Activated T-helper 2 cell treated with anti-CD3 and anti-CD28 coated beads, Interferon-gamma antibody, Interleukin-2, Interleukin-4, amounts not matched to agents 10 μg/mL and 5 μg/mL and 100 μg/mL, durations not matched to agents 14 hours and 24 hours and 36 hours (primary cell): ENCODE measurements at regions of chr1 and their contacts with region 1.

Region 1: DNA sequence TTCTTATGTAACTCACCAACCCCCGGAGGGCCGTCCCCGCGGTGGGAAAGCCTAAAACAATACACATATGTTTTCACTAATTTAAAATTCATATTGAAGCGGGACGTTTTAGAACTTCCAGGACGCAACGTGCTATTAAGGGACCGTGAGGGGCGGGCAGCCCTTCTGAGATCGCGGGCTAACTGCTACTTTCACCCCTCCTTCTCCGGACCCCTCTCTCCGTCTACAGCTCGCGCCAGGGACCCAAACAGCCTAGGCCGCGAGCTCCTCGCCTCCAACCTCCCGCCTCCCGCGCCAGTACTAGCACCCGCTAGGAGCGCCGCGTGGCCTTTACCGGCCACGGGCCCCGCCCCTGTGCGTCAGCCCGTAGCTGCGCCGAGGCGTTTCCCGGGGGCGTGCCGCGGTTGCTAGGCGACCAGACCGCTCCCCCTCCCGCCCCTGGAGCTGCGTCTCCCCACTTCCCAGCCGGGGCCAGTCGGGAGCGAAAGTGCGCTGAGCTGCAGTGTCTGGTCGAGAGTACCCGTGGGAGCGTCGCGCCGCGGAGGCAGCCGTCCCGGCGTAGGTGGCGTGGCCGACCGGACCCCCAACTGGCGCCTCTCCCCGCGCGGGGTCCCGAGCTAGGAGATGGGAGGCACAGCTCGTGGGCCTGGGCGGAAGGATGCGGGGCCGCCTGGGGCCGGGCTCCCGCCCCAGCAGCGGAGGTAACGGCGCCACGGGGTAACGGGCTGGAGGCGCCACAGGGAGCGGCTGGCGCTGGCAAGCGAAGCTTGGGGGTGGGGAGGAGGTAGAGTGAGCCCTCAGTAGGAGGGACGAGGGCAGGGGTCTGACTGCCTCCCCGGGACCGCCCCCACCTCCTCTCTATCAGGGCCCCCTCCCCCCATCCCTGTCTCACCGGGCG is at the start of gene DYRK3:
- DNase-seq: peak; percentile 93
- H3K4me3 Mint-ChIP-seq: peak within 1 kb of the TSS; percentile 85
- H3K27ac Mint-ChIP-seq: peak within 1 kb of the TSS; percentile 95
- H3K4me1 Mint-ChIP-seq: peaks cover 23% of the 10 kb centered on the region
- H3K27me3 Mint-ChIP-seq: peaks cover 14% of the 10 kb centered on the region
- total RNA-seq, gene DYRK3: 12.1 and 13.0 TPM in 2 replicates

Region 2: DNA sequence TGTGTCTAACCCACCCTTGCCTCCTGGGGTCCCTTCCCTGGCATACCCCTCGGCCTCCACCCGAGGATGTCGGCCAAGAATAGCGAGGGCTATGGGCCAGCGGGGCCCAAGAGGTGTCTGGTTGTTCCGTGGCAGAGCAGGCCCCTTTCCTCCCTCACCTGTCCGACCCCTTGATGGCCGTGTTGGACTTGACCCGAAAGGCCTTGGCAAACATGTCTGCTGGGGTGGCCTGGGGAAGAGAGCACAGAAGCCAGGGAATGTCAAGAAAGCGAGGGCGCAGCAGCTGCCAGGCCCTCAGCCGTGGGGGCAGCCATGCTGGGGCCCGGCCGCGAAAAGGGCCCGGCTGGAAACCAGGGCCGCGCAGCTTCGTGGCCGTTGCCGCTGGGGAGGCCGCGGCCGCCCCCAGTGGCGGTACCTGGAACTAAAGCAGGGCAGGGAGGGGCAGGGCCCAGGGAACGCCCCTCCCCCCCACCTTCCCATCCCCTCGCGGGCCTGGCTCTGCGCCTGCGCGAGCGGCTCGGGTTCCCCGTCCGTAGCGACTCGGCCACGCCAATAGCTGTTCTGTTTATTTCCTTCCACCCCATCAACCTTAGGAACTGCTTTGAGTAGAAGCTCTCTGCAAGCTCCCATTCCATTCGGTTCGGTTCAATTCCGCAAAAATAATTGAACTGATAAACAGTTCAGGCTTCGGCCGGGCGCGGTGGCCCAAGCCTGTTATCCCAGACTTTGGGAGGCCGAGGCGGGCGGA is 23.0 kb before region 1 on chr1 and contains the start of gene EIF2D:
- intact Hi-C with region 1: loop called (anchors 1 kb)
- DNase-seq: peak; percentile 91
- H3K4me3 Mint-ChIP-seq: peak within 1 kb of the TSS; percentile 92
- H3K27ac Mint-ChIP-seq: peak within 1 kb of the TSS; percentile 84
- H3K4me1 Mint-ChIP-seq: peaks cover 30% of the 10 kb centered on the region
- H3K27me3 Mint-ChIP-seq: peaks cover 7% of the 10 kb centered on the region
- total RNA-seq, gene EIF2D: 72.7 and 73.3 TPM in 2 replicates

Region 3: GRCh38 chr1:206725109-206725963 is 90.0 kb after region 1 on chr1:
- intact Hi-C with region 1: loop called (anchors 5 kb)
- DNase-seq: peak; percentile 45
- H3K4me3 Mint-ChIP-seq: no peak overlapping the region
- H3K27ac Mint-ChIP-seq: no peak overlapping the region
- H3K4me1 Mint-ChIP-seq: peaks cover 52% of the 10 kb centered on the region
- H3K27me3 Mint-ChIP-seq: no peaks in the 10 kb centered on the region

Region 4: DNA sequence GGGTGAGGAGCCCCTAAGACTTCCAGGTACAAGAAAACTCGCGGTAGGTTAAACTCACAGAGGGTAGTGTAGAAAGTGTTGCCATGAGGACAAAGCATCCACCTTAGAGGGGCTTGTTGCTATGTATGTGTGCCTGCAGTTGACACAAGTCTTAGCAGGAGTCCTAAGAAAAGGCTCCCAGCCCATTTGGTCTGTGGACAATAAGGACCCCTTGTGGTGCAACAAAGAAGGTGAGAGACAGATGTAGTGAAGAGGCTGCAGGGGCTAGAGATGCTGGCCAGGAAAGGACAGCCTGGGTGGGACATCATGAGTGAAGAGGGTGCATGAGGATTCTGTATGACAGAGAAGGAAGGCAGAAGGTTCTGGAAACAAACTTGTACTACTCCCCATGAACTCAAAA is 173.3 kb after region 1 on chr1:
- intact Hi-C with region 1: loop called (anchors 2 kb)
- DNase-seq: peak; percentile 47
- H3K4me3 Mint-ChIP-seq: no peak overlapping the region
- H3K27ac Mint-ChIP-seq: no peak overlapping the region
- H3K4me1 Mint-ChIP-seq: peaks cover 48% of the 10 kb centered on the region
- H3K27me3 Mint-ChIP-seq: peaks cover 3% of the 10 kb centered on the region

Region 5: GRCh38 chr1:206925106-206925736 is 289.9 kb after region 1 on chr1:
- intact Hi-C with region 1: no loop called
- DNase-seq: peak; percentile 47
- H3K4me3 Mint-ChIP-seq: no peak overlapping the region
- H3K27ac Mint-ChIP-seq: no peak overlapping the region
- H3K4me1 Mint-ChIP-seq: peaks cover 28% of the 10 kb centered on the region
- H3K27me3 Mint-ChIP-seq: no peaks in the 10 kb centered on the region

Region 6: GRCh38 chr1:206982216-206982615 is 346.9 kb after region 1 on chr1:
- intact Hi-C with region 1: loop called (anchors 5 kb)
- DNase-seq: peak; percentile 20
- H3K4me3 Mint-ChIP-seq: no peak overlapping the region
- H3K27ac Mint-ChIP-seq: no peak overlapping the region
- H3K4me1 Mint-ChIP-seq: no peaks in the 10 kb centered on the region
- H3K27me3 Mint-ChIP-seq: peaks cover 54% of the 10 kb centered on the region